Cardiac septum (tissue), 1 donor: ENCODE measurements at regions of chr16 and their contacts with region 1.

Region 1: GRCh38 chr16:85172455-85173145 is 60.3 kb upstream of the CIBAR2 start:
- DNase-seq: no peak

Region 2: GRCh38 chr16:85126705-85127419 is 45.7 kb before region 1 on chr16:
- intact Hi-C with region 1: loop called (anchors 5 kb)
- DNase-seq: no peak

Region 3: GRCh38 chr16:85187002-85187401 is 14.4 kb after region 1 on chr16:
- intact Hi-C with region 1: no loop called
- DNase-seq: peak; percentile 83

Region 4: DNA sequence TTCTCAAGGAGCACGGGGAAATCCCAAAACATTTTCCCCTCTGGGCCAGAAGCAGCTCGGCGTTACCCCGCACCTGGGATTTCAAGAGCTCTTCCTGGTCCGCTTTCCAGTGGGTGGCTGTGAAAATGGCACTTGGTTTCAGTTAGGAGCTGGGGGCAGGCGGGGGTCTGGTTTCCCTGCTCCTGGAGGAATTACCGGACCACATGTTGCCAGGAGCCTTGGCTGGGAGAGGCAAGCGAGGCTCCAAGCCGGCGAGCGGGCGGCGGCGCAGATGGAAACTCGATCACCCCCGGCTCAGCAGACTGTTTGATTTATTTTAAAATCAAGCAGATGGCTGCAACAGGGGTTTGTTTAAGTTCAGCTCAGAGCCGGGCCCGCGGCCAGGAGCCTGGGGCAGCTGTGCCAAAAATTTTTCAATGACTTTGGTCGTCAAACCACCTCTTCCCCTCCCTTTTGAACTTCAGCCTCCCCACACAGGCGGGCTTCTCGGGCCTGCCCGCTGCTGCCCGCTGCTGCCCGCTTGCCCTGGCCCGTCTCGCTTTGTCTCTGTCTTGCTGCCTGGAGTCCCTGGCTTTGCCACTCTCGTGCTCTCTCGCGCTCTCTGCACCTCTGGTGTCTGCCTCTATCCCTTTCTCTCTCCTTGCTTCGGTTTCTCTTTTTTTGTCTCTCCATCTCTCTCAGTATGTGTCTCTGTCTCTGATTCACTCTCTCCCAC is 47.7 kb after region 1 on chr16:
- intact Hi-C with region 1: loop called (anchors 5 kb)
- DNase-seq: peak; percentile 87

Region 5: GRCh38 chr16:85234310-85235204 is 62.0 kb after region 1 on chr16:
- intact Hi-C with region 1: loop called (anchors 5 kb)
- DNase-seq: no peak

Region 6: GRCh38 chr16:85253084-85253941 is 80.7 kb after region 1 on chr16:
- intact Hi-C with region 1: loop called (anchors 5 kb)
- DNase-seq: peak; percentile 84

Region 7: DNA sequence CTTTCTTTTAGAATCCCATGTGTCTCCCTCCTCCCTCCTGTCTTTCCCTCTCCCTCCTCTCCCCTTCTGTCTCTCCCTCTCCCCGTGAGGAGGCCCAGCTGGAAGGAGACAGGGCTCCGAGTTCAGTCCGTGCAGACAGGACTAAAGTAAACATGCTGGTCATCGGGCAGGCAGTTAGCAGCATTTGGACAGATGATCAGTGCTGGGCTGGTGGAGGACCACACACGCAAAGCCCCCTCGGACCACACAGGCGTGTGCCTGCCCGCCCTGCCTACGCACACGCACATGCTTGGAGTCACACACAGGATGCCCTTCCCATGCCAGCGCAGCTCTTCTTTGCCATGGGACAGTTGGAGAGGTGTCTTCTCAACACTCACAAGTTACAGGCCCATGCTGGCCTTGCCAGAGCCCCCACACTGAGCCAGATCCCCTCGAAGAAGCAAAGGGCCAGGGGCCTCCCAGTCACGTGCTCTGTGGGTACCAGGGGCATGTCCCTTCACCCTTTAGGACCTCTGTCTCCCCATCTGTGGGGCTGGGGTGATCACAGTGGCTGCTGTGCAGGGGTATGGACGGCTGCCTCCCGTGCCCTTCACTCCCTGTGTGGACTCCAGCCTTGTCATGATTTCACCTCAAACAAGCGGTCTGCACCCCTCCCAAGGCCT is 1122.1 kb after region 1 on chr16:
- intact Hi-C with region 1: no loop called
- DNase-seq: no peak